ENCODE measurements at regions of chr7 and their contacts with region 1.

Region 1: GRCh38 chr7:45990276-45990675 is 69.2 kb upstream of the IGFBP3 start:
- DNase-seq: no peak
- ATAC-seq: no peak
- H3K4me3 ChIP-seq: no peak overlapping the region
- H3K27ac ChIP-seq: no peak overlapping the region
- H3K4me1 ChIP-seq: no peaks in the 10 kb centered on the region
- H3K27me3 ChIP-seq: no peaks in the 10 kb centered on the region
- CTCF ChIP-seq: no peak

Region 2: DNA sequence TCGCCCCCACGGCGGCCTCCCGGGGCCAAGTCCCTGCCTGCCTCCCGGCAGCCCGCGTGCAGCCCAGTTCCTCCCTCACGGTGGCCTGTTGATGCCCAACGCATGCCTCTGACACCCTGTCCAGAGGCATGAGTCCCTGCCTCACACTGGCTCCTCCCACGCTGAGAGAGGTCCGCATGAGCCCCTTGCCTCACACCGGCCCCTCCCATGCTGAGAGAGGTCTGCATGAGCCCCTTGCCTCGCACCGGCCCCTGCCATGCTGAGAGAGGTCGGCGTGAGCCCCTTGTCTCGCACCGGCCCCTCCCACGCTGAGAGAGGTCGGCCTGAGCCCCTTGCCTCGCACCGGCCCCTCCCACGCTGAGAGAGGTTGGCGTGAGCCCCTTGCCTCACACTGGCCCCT is 177.3 kb before region 1 on chr7:
- intact Hi-C with region 1: no loop called
- DNase-seq: no peak
- ATAC-seq: no peak
- H3K4me3 ChIP-seq: no peak overlapping the region
- H3K27ac ChIP-seq: no peak overlapping the region
- H3K4me1 ChIP-seq: no peaks in the 10 kb centered on the region
- H3K27me3 ChIP-seq: no peaks in the 10 kb centered on the region
- CTCF ChIP-seq: no peak

Region 3: GRCh38 chr7:45923290-45923689 is 67.0 kb before region 1 on chr7:
- intact Hi-C with region 1: no loop called
- DNase-seq: peak; percentile 75 to 79
- ATAC-seq: peak in 7 of 8 donors; percentile 47 to 74 (median 66)
- H3K4me3 ChIP-seq: peak overlapping the region in 9 of 10 donors; percentile 34 to 77 (median 63)
- H3K27ac ChIP-seq: peak overlapping the region in 5 of 10 donors; percentile 7 to 73 (median 70)
- H3K4me1 ChIP-seq: peaks cover 5 to 53% (median 45%) of the 10 kb centered on the region in 9 donors
- H3K27me3 ChIP-seq: peaks cover 0 to 57% (median 0%) of the 10 kb centered on the region in 7 donors
- CTCF ChIP-seq: peak; percentile 88 to 98 (median 93)

Region 4: GRCh38 chr7:46058086-46058823 is 68.0 kb after region 1 on chr7:
- intact Hi-C with region 1: loop called in 1 of 10 experiments (anchors 10 kb)
- DNase-seq: no peak
- ATAC-seq: no peak
- H3K4me3 ChIP-seq: no peak overlapping the region
- H3K27ac ChIP-seq: no peak overlapping the region
- H3K4me1 ChIP-seq: peaks cover 0 to 25% (median 13%) of the 10 kb centered on the region in 9 donors
- H3K27me3 ChIP-seq: no peaks in the 10 kb centered on the region
- CTCF ChIP-seq: no peak